Activated T-helper 1 cell treated with anti-CD3 and anti-CD28 coated beads, Interleukin-12 subunit alpha, Interleukin-12 subunit beta, Interleukin-2, Interleukin-4 antibody, amounts not matched to agents 30 ng/mL and 10 ng/mL and 1 ng/mL, durations not matched to agents 14 hours and 24 hours and 36 hours (primary cell): ENCODE measurements at regions of chr10 and their contacts with region 1.

Region 1: DNA sequence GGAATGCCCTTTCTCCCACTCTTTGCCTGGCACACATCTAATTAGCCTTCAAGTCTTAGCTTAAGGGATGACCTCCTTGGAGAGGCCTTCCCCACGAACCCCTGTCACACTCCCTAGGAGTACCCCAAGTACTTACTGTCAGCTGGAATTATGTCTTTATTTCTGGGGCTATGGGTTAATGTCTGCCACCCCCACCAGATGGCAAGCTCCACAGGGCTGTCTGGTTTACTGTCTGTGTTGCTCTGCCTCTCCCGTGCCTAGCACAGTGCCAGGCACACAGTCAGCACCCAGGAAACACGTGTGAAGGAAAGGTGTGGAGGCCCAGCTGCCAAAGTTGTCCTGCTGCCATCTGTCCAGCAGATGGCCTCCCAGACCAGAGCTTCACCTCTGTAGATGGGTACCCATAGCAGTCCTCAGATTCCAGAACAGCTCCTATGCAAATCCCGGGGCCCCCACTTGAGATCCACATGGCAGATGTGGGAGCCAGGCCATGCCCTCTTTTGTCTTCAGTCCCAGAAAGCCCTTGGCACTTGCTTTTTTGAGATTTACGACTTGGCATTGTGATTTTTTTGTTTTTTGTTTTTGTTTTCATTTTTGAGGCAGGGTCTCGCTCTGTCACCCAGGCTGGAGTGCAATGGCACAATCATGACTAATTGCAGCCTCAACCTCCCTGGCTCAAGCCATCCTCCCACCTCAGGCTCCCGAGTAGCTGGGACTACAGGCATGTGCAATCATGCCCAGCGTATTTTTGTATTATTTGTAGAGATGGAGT is 17.2 kb upstream of the PALD1 start:
- DNase-seq: peak; percentile 21
- H3K4me3 Mint-ChIP-seq: no peak overlapping the region
- H3K27ac Mint-ChIP-seq: no peak overlapping the region
- H3K4me1 Mint-ChIP-seq: no peaks in the 10 kb centered on the region
- H3K27me3 Mint-ChIP-seq: peaks cover 51% of the 10 kb centered on the region

Region 2: GRCh38 chr10:70293169-70293813 is 168.1 kb before region 1 on chr10:
- intact Hi-C with region 1: no loop called
- DNase-seq: no peak
- H3K4me3 Mint-ChIP-seq: no peak overlapping the region
- H3K27ac Mint-ChIP-seq: no peak overlapping the region
- H3K4me1 Mint-ChIP-seq: peaks cover 5% of the 10 kb centered on the region
- H3K27me3 Mint-ChIP-seq: peaks cover 5% of the 10 kb centered on the region

Region 3: DNA sequence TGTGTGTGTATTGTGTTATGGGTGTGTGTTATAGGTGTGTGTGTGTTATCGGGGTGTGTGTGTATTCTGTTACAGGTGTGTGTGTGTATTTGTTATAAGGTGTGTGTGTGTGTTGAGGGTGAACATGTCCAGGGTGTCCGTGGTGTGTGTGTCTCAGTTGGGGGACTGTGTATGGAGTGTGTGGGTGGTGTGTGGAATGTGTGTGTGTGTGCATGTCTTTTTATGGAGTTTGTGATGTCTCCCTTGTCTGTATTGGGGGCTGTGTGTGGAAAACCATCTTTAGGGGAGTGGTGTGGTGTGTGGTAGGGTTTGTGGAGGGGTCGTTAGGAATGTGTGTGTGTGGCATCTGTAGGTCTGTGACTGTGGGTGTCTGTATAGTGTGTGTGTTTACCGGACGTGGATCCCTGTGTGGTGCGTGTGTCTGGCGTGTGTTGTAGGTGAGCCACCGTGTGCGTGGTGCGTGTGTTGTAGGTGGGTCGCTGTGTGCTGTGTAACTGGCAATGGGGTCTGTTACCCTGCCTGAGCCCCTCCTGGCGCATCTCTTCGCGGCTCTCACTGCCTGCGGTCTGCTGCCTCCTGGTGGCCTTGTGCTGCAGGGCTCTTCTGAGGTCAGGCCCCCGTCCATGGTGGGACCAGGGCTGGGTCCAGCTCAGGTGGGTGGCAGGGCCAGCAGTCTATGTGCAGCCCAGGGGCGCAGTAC is 78.8 kb after region 1 on chr10:
- intact Hi-C with region 1: loop called (anchors 1 kb)
- DNase-seq: no peak
- H3K4me3 Mint-ChIP-seq: no peak overlapping the region
- H3K27ac Mint-ChIP-seq: no peak overlapping the region
- H3K4me1 Mint-ChIP-seq: no peaks in the 10 kb centered on the region
- H3K27me3 Mint-ChIP-seq: peaks cover 7% of the 10 kb centered on the region

Region 4: DNA sequence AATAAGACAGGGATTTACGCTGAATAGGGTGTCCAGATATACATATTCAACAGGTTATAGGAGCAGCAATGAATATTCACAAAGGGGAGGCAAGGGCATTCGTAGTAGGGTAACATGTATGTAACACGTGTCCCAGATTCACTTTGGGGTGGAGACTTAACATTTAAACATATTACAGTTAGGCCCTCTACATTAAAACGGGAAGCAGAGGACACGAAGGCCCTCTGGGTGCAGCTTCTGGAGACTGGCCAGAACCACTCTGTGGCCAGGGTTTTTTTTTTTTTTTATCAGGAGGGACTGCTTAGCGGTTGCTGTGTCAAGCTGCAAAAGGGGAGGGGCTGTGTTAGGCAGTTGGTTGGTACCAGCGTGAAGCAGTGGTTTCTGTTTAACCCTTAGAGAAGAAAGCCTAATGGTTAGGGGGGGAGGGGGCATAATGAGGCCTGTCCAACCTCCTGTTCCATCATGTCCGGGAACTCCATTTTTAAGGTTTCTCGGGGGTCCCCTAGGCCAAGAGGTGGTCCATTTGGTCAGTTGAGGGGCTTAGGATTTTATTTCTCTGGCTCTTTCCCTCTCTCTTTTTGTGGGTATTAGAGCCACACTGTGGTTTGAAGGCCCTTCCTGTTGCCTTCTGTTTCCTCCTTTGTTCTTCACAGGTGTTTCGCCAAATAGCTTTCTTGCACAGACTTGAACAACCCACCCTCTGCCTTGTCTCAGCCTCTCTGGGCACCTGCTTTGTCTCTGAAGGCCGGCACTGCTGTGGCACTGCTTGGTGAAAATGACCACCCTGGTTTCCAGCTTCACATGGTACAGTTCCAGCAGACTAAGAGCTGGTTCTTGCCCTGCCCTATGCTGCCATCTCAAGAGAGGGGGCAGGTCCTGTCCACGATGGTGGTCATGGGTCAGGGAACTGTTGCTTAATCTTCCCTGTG is 114.7 kb after region 1 on chr10:
- intact Hi-C with region 1: no loop called
- DNase-seq: no peak
- H3K4me3 Mint-ChIP-seq: no peak overlapping the region
- H3K27ac Mint-ChIP-seq: peak overlapping the region; percentile 76
- H3K4me1 Mint-ChIP-seq: peaks cover 49% of the 10 kb centered on the region
- H3K27me3 Mint-ChIP-seq: peaks cover 6% of the 10 kb centered on the region